ENCODE measurements at regions of chr18 and their contacts with region 1.

Region 1: GRCh38 chr18:623761-624620 is 27.2 kb downstream of the CLUL1 start:
- DNase-seq: peak; percentile 76
- ATAC-seq: peak; percentile 53 to 76

Region 2: DNA sequence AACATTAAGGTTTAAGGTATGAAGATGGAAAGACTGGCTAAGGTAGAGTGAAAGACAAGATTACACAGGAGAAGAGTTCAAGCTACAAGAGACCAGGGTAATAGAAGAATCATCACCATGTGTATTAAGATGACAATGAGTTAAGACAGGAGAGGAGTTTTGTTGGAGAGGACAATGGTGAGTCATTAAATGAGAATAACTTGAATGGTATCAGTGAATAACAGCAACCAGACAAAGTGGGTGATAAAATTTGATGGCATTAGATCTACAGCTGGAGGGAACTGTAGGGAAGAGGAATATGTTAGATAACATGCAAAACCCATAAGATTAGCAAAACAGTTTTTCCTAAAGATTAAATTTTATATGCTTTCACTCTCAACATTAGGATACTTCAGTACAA is 107.2 kb after region 1 on chr18:
- intact Hi-C with region 1: loop called in 1 of 2 experiments (anchors 10 kb)
- DNase-seq: no peak
- ATAC-seq: no peak

Region 3: GRCh38 chr18:744832-745597 is 121.0 kb after region 1 on chr18:
- intact Hi-C with region 1: no loop called
- DNase-seq: no peak
- ATAC-seq: no peak

Region 4: GRCh38 chr18:830315-830901 is 206.4 kb after region 1 on chr18:
- intact Hi-C with region 1: loop called (anchors 2 to 5 kb)
- DNase-seq: no peak
- ATAC-seq: peak; percentile 62 to 79

Region 5: DNA sequence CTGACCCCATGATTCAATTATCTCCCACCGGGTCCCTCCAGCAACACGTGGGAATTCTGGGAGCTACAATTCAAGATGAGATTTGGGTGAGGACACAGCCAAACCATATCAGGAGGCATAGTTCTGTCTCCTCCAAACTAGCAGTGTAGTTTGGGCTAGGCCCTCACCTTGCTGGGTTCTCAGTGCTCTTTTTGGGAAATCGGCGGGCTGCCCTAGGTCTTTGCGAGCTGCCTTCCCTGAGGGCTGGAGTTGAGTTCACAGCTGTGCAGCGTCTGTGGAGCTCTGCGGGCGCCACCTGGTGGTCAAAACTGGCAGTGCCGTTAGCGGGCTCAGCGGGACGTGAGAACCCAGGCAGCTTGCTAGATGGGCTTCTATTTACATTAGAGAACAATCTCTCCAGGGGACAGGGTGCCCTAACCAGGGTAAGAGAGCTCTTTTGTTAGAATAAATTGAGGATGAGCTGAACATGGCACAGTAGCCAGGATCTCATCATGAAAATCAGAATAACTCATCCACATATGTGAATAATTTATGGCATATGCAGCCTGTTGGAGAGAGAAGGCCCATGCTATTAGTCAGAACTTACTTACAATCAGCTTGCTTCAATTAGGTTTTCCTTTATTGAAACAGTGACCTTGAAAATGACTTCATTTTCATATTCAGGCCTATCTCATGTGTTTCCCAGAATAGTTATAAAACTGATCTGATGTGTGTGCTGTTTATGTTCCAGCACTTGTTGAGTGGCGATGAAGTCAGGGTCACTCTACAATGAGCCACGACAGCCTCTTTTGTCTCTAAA is 215.4 kb after region 1 on chr18:
- intact Hi-C with region 1: loop called (anchors 2 to 5 kb)
- DNase-seq: peak; percentile 89
- ATAC-seq: peak; percentile 94 to 96